ENCODE measurements at regions of chr16 and their contacts with region 1.

Region 1: GRCh38 chr16:20803192-20803560 is 3.1 kb downstream of the ERI2 start:
- DNase-seq: no peak
- H3K4me3 ChIP-seq: no peak overlapping the region
- H3K27ac ChIP-seq: no peak overlapping the region
- H3K4me1 ChIP-seq: peaks cover 5 to 31% (median 26%) of the 10 kb centered on the region in 4 donors
- H3K27me3 ChIP-seq: no peaks in the 10 kb centered on the region
- CTCF ChIP-seq: no peak
- EP300 ChIP-seq: no peak
- POLR2A ChIP-seq: no peak

Region 2: DNA sequence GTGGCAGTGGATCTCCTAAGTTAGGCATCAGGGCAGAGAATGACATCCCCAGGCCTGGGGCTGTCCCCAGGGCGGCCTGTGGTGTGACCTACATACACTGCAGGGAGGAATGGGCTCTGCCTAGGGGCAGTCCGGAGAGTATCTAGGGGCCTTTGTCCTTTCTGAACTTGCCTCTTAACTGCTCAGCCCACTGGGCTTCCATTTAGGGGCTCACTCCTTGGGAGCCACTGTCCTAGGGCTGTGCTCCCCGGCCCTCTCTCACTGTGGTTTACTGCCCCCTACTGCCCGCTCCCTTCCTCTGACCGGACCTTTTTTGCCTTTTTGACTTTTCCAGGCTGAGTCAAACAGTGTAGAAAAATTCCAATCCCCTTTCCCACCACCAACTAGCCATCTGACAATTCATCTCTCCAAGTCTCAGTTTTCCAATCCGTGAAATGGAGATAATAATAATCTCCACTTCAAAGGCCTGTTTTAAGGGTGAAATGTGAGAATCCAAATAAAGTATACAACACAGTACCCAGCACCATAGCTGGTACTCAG is 280.6 kb after region 1 on chr16:
- intact Hi-C with region 1: loop called (anchors 5 kb)
- DNase-seq: peak; percentile 91
- H3K4me3 ChIP-seq: no peak overlapping the region
- H3K27ac ChIP-seq: no peak overlapping the region
- H3K4me1 ChIP-seq: peaks cover 0 to 4% (median 0%) of the 10 kb centered on the region in 4 donors
- H3K27me3 ChIP-seq: no peaks in the 10 kb centered on the region
- CTCF ChIP-seq: peak; percentile 67 to 82 (median 77)
- EP300 ChIP-seq: no peak
- POLR2A ChIP-seq: no peak

Measured in esophagus muscularis mucosa (tissue), 4 donors.